ENCODE measurements at regions of chr2 and their contacts with region 1.

Region 1: DNA sequence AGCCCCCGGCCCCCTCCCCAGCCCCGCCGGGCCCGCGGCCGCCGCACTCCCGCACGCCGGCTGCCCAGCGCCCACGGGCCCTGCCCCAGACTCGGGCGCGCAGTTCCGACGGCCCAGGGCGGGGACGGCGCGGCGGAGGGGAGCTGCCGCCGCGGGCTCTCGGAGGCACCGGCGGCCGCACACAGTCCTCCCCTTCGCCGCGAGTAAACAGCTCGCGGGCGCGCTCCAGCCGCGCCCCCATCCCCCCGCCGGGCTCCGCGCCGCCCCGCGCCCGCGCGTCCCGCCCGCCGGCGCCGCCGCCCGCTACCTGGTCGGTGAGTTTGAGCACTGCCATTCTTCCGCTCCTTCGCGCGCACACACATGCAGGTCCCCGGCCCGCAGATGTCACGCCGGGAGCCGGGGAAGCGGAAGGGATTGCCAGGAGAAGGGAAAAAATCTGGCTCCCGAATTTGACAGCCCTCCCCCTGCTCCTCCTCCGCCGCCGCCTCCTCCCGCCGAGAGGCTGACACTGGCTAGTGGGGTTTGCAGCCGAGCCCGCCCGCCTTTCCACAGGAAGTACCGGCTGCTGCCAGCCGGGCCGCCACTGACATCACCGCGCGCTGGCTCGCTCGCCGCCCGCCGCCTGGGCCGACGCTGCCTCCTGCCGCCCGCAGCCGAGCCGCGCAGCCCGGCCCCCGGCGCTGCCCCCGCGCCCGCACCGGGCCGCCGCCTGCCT is at the start of gene ANKRD44:
- DNase-seq: peak; percentile 86 to 94 (median 91)
- ATAC-seq: peak; percentile 88
- H3K4me3 ChIP-seq: peak within 1 kb of the TSS; percentile 90
- H3K4me3 Mint-ChIP-seq: peak within 1 kb of the TSS; percentile 89 to 98 (median 94)
- H3K27ac ChIP-seq: peak within 1 kb of the TSS; percentile 85
- H3K27ac Mint-ChIP-seq: peak within 1 kb of the TSS; percentile 93 to 99 (median 95)
- H3K4me1 ChIP-seq: peaks cover 34 to 43% of the 10 kb centered on the region in 2 donors
- H3K4me1 Mint-ChIP-seq: peaks cover 35 to 74% (median 68%) of the 10 kb centered on the region in 7 donors
- H3K27me3 ChIP-seq: no peaks in the 10 kb centered on the region
- H3K27me3 Mint-ChIP-seq: no peaks in the 10 kb centered on the region
- total RNA-seq, gene ANKRD44: 234 to 296 (median 291) TPM

Region 2: DNA sequence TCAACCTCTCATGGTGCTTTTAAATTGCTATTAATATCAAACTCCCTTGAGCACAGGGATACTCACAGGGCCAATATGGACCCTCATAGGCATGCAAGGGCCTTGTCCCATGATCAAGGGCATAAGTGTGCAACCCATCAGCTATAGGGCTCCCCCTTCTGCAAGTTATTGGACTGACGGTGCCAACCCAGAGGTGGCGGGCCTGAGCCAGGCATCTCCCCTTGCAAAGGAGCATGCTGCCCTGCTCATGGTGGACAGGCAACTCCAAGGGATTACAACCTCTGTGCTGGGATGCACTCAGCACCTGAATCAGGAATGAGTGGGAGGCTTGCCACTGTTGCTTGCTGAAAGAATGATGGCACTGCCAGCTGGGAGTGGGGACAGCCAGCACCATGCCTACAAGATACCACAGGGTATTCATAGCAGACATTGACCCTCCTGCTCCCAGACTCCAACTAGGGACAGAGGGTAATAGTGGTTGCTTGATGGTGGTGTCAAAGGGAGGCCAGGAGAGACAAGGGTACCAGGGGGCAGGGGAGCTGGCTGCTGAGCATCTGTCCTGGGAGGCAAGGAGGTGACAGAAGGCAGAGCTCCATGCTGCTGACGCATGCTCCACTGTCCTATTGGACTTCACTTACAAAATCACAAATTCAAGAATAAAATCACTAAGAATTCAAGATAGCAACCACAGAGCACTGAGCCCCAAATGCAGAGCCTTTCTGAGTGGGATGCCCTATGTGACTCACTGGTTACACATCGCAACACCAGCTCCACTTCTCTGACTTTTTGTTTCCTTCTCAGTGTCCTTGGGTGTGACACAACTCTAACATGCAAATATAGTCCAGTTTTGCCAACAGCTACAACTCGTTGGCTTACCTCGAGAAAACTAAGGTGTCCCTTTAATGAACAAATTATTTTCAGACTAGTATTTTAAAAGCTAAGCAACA is 828.0 kb before region 1 on chr2:
- CTCF ChIA-PET with region 1: no interaction called
- POLR2A ChIA-PET with region 1: no interaction called
- intact Hi-C with region 1: no loop called
- DNase-seq: no peak
- ATAC-seq: no peak
- H3K4me3 ChIP-seq: no peak overlapping the region
- H3K4me3 Mint-ChIP-seq: no peak overlapping the region
- H3K27ac ChIP-seq: no peak overlapping the region
- H3K27ac Mint-ChIP-seq: no peak overlapping the region
- H3K4me1 ChIP-seq: no peaks in the 10 kb centered on the region
- H3K4me1 Mint-ChIP-seq: no peaks in the 10 kb centered on the region
- H3K27me3 ChIP-seq: peaks cover 0 to 4% of the 10 kb centered on the region in 2 donors
- H3K27me3 Mint-ChIP-seq: peaks cover 23 to 37% (median 29%) of the 10 kb centered on the region in 5 donors

Region 3: GRCh38 chr2:197011799-197012641 is 298.4 kb before region 1 on chr2:
- CTCF ChIA-PET with region 1: no interaction called
- POLR2A ChIA-PET with region 1: no interaction called
- intact Hi-C with region 1: loop called in 1 of 2 experiments (anchors 2 kb)
- DNase-seq: peak in 6 of 9 donors; percentile 11 to 51 (median 40)
- ATAC-seq: peak; percentile 76
- H3K4me3 ChIP-seq: no peak overlapping the region
- H3K4me3 Mint-ChIP-seq: no peak overlapping the region
- H3K27ac ChIP-seq: no peak overlapping the region
- H3K27ac Mint-ChIP-seq: peak overlapping the region; percentile 5 to 90 (median 73)
- H3K4me1 ChIP-seq: peaks cover 0 to 3% of the 10 kb centered on the region in 2 donors
- H3K4me1 Mint-ChIP-seq: peaks cover 0 to 18% (median 9%) of the 10 kb centered on the region in 7 donors
- H3K27me3 ChIP-seq: no peaks in the 10 kb centered on the region
- H3K27me3 Mint-ChIP-seq: no peaks in the 10 kb centered on the region

Region 4: GRCh38 chr2:197198890-197199289 is 111.5 kb before region 1 on chr2:
- CTCF ChIA-PET with region 1: interaction called, 80 read pairs
- POLR2A ChIA-PET with region 1: interaction called, 250 read pairs
- intact Hi-C with region 1: loop called (anchors 1 to 2 kb)
- DNase-seq: peak; percentile 56 to 98 (median 96)
- ATAC-seq: peak; percentile 94
- H3K4me3 ChIP-seq: peak overlapping the region; percentile 50
- H3K4me3 Mint-ChIP-seq: peak overlapping the region; percentile 83 to 100 (median 90)
- H3K27ac ChIP-seq: peak overlapping the region; percentile 81
- H3K27ac Mint-ChIP-seq: peak overlapping the region; percentile 93 to 100 (median 98)
- H3K4me1 ChIP-seq: peaks cover 75 to 83% of the 10 kb centered on the region in 2 donors
- H3K4me1 Mint-ChIP-seq: peaks cover 56 to 98% (median 86%) of the 10 kb centered on the region in 7 donors
- H3K27me3 ChIP-seq: no peaks in the 10 kb centered on the region
- H3K27me3 Mint-ChIP-seq: peaks cover 0 to 3% (median 0%) of the 10 kb centered on the region in 5 donors

Region 5: DNA sequence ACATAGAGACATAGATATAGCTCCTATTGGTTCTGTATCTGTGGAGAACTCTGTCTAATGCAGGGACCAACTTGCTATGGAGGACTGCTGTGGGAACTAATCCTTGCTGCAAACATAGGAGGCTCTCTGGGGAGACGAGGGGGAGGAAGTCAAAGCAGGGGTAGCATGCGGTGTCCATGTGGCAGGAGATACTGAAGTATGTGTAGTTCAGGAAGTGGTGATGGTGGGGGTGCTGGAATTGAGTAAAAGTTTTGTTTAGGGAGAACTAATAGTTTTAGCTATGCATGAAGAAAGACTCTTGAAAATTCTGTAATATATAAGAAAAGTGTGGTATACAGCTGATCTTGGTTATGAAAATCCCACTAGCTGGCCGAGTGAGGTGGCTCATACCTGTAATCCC is 61.8 kb before region 1 on chr2:
- CTCF ChIA-PET with region 1: interaction called, 4 read pairs
- POLR2A ChIA-PET with region 1: interaction called, 10 read pairs
- intact Hi-C with region 1: no loop called
- DNase-seq: peak in 5 of 9 donors; percentile 36 to 50 (median 43)
- ATAC-seq: peak; percentile 73
- H3K4me3 ChIP-seq: peak overlapping the region; percentile 17
- H3K4me3 Mint-ChIP-seq: peak overlapping the region; percentile 35 to 78 (median 66)
- H3K27ac ChIP-seq: peak overlapping the region; percentile 49
- H3K27ac Mint-ChIP-seq: peak overlapping the region; percentile 43 to 94 (median 82)
- H3K4me1 ChIP-seq: peaks cover 56 to 77% of the 10 kb centered on the region in 2 donors
- H3K4me1 Mint-ChIP-seq: peaks cover 48 to 99% (median 89%) of the 10 kb centered on the region in 7 donors
- H3K27me3 ChIP-seq: no peaks in the 10 kb centered on the region
- H3K27me3 Mint-ChIP-seq: no peaks in the 10 kb centered on the region

Region 6: DNA sequence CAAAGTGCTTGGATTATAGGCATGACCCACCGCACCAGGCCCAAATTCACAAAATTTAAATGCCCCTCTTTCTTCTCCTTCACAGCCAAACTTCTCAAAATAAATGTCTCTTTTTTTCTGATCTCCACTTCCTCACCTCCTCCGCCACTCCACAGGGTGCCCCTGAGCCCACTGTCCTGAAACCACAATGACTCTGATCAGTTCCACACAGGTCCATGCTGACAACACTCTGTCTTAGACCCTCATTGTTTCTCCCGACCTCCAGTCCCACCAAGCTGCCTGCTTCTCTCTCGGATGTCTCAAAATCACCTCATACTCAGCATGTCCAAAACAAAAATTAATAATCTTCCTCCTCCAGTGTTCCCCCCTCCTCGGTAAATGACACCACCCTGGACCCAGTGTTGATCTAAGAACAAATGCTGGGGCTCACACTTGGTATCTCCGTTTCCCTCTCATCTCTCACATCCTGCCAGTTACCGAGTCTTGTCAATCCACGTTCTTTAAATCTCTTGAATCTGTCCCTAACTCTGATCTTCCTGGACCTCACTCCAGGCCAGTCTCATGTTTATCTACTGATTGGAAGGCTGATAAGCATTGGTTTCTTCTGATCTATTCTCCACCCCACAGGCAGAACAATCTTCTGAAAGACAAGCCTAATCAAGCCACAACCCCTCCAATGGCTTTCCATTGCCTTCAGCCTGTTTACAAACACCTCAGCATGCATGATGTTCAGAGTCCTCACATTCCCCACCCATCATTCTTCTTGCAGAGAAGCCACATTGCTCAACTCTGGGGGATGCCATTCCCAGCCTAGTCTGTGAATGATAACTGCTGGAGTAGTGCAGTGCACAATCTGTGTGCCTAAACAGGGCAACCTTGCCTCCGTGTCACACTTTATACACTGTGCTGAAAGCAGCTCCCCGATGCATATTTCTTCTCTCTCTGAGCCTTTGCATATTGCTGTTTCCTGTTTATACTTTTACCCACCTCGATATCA is 12.6 kb after region 1 on chr2:
- CTCF ChIA-PET with region 1: interaction called, 16 read pairs
- POLR2A ChIA-PET with region 1: interaction called, 43 read pairs
- intact Hi-C with region 1: loop called (anchors 1 kb)
- DNase-seq: peak in 6 of 9 donors; percentile 43 to 65 (median 50)
- ATAC-seq: peak; percentile 76
- H3K4me3 ChIP-seq: peak overlapping the region; percentile 36
- H3K4me3 Mint-ChIP-seq: peak overlapping the region; percentile 68 to 88 (median 76)
- H3K27ac ChIP-seq: peak overlapping the region; percentile 73
- H3K27ac Mint-ChIP-seq: peak overlapping the region; percentile 96 to 99 (median 97)
- H3K4me1 ChIP-seq: peaks cover 33 to 59% of the 10 kb centered on the region in 2 donors
- H3K4me1 Mint-ChIP-seq: peaks cover 43 to 81% (median 71%) of the 10 kb centered on the region in 7 donors
- H3K27me3 ChIP-seq: no peaks in the 10 kb centered on the region
- H3K27me3 Mint-ChIP-seq: no peaks in the 10 kb centered on the region

Region 7: GRCh38 chr2:197499594-197500526 is 189.4 kb after region 1 on chr2 and contains the starts of genes HSPD1 and HSPE1:
- CTCF ChIA-PET with region 1: no interaction called
- POLR2A ChIA-PET with region 1: no interaction called
- intact Hi-C with region 1: loop called in 1 of 2 experiments (anchors 5 kb)
- DNase-seq: peak; percentile 89 to 98 (median 97)
- ATAC-seq: peak; percentile 93
- H3K4me3 ChIP-seq: peak within 1 kb of the TSS; percentile 94
- H3K4me3 Mint-ChIP-seq: peak within 1 kb of the TSS; percentile 84 to 100 (median 94)
- H3K27ac ChIP-seq: peak within 1 kb of the TSS; percentile 90
- H3K27ac Mint-ChIP-seq: peak within 1 kb of the TSS; percentile 83 to 98 (median 95)
- H3K4me1 ChIP-seq: peaks cover 17 to 41% of the 10 kb centered on the region in 2 donors
- H3K4me1 Mint-ChIP-seq: peaks cover 31 to 69% (median 57%) of the 10 kb centered on the region in 7 donors
- H3K27me3 ChIP-seq: no peaks in the 10 kb centered on the region
- H3K27me3 Mint-ChIP-seq: no peaks in the 10 kb centered on the region
- total RNA-seq, gene HSPD1: 127 to 276 (median 137) TPM
- total RNA-seq, gene HSPE1: 46.3 to 127 (median 52.2) TPM

Measured in naive thymus-derived CD4-positive, alpha-beta T cell (primary cell).